ENCODE measurements at regions of chr9 and their contacts with region 1.

Region 1: DNA sequence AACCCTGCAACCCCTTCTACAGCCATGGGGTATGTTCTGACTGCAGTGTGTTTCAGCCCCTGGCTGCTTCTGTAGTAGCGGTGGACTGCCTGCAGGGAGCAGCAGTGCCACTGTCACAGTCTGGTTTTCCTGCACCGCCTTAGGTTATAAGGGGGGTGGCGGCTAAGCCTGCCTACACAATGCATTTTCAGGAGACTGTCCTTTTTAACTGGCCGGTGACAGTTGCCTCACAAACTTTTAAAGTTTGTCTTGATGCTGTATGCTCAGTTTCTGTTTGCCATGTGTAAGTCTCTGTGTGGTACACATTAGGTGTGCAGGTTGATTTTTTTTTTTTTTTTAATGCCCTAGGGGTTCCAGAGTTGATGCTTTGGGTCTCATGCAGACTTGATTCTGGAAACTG is 53.0 kb downstream of the NUP214 start:
- DNase-seq: peak; percentile 67 to 71
- ATAC-seq: peak; percentile 88 to 95 (median 94)
- H3K4me3 ChIP-seq: no peak overlapping the region
- H3K27ac ChIP-seq: no peak overlapping the region
- H3K4me1 ChIP-seq: peaks cover 0 to 29% (median 17%) of the 10 kb centered on the region in 9 donors
- H3K27me3 ChIP-seq: no peaks in the 10 kb centered on the region
- CTCF ChIP-seq: peak; percentile 85 to 98 (median 93)

Region 2: GRCh38 chr9:131270171-131271015 is 92.0 kb after region 1 on chr9:
- intact Hi-C with region 1: loop called in 6 of 10 experiments (anchors 2 to 10 kb)
- DNase-seq: peak; percentile 81 to 92
- ATAC-seq: peak; percentile 50 to 73 (median 63)
- H3K4me3 ChIP-seq: peak overlapping the region in 7 of 10 donors; percentile 3 to 86 (median 18)
- H3K27ac ChIP-seq: peak overlapping the region; percentile 65 to 99 (median 96)
- H3K4me1 ChIP-seq: peaks cover 44 to 100% (median 86%) of the 10 kb centered on the region in 9 donors
- H3K27me3 ChIP-seq: no peaks in the 10 kb centered on the region
- CTCF ChIP-seq: no peak

Region 3: GRCh38 chr9:131277910-131278701 is 99.7 kb after region 1 on chr9:
- intact Hi-C with region 1: loop called in 7 of 10 experiments (anchors 2 to 10 kb)
- DNase-seq: peak; percentile 87 to 92
- ATAC-seq: peak; percentile 40 to 70 (median 60)
- H3K4me3 ChIP-seq: peak overlapping the region; percentile 59 to 92 (median 84)
- H3K27ac ChIP-seq: peak overlapping the region; percentile 89 to 99 (median 98)
- H3K4me1 ChIP-seq: peaks cover 14 to 52% (median 33%) of the 10 kb centered on the region in 9 donors
- H3K27me3 ChIP-seq: peaks cover 0 to 30% (median 14%) of the 10 kb centered on the region in 7 donors
- CTCF ChIP-seq: no peak

Measured in heart right ventricle (tissue), 16 donors.